ENCODE measurements at regions of chr6 and their contacts with region 1.

Region 1: GRCh38 chr6:87929843-87930288 is 117.8 kb upstream of the SPACA1 start:
- DNase-seq: peak; percentile 76
- H3K4me3 Mint-ChIP-seq: no peak overlapping the region
- H3K27ac Mint-ChIP-seq: no peak overlapping the region
- H3K4me1 Mint-ChIP-seq: no peaks in the 10 kb centered on the region
- H3K27me3 Mint-ChIP-seq: no peaks in the 10 kb centered on the region

Region 2: GRCh38 chr6:87139236-87139635 is 790.6 kb before region 1 on chr6:
- CTCF ChIA-PET with region 1: no interaction called
- intact Hi-C with region 1: loop called (anchors 5 kb)
- DNase-seq: peak; percentile 60
- H3K4me3 Mint-ChIP-seq: no peak overlapping the region
- H3K27ac Mint-ChIP-seq: no peak overlapping the region
- H3K4me1 Mint-ChIP-seq: peaks cover 2% of the 10 kb centered on the region
- H3K27me3 Mint-ChIP-seq: peaks cover 7% of the 10 kb centered on the region

Region 3: GRCh38 chr6:87832025-87832825 is 97.6 kb before region 1 on chr6:
- CTCF ChIA-PET with region 1: no interaction called
- intact Hi-C with region 1: loop called (anchors 5 kb)
- DNase-seq: no peak
- H3K4me3 Mint-ChIP-seq: peak overlapping the region; percentile 69
- H3K27ac Mint-ChIP-seq: peak overlapping the region; percentile 72
- H3K4me1 Mint-ChIP-seq: peaks cover 8% of the 10 kb centered on the region
- H3K27me3 Mint-ChIP-seq: no peaks in the 10 kb centered on the region

Region 4: GRCh38 chr6:87914637-87915395 is 15.1 kb before region 1 on chr6:
- CTCF ChIA-PET with region 1: no interaction called
- intact Hi-C with region 1: no loop called
- DNase-seq: no peak
- H3K4me3 Mint-ChIP-seq: no peak overlapping the region
- H3K27ac Mint-ChIP-seq: no peak overlapping the region
- H3K4me1 Mint-ChIP-seq: no peaks in the 10 kb centered on the region
- H3K27me3 Mint-ChIP-seq: no peaks in the 10 kb centered on the region

Region 5: DNA sequence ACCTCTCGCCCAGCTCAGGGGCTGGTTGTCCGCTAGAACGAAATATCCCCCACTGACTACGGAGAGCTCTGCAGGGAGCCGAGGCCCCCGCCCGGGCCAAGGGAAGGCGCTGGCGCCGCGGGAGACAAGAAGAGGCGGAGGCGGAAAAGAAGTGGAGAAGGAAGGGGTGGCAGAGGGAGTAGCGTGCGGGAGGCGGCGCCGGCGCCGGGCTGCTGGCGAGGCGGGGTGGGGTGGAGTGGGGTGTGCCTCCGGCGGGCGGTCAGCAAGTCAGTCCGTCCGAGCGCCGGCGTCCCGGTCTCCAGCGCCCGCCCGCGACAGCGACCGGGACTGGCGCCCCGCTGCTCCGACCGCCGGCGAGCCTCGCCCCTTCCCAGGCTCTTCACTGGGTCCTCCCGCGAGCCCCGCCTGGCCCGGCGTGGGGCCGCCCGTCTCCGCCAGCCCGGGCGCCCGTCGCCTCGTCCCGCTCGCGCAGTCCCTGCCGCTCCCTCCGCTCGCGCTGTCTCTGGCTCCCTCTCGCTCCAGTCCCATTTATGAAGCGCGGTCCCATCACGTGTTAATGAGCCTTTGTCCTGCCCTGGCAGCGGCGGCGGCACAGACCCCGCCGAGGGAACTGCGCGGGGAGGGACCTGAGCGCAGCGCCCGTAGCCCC is 236.1 kb after region 1 on chr6 and contains the start of gene CNR1:
- CTCF ChIA-PET with region 1: interaction called, 3 read pairs
- intact Hi-C with region 1: loop called (anchors 5 kb)
- DNase-seq: no peak
- H3K4me3 Mint-ChIP-seq: peak within 1 kb of the TSS; percentile 74
- H3K27ac Mint-ChIP-seq: no peak within 1 kb of the TSS
- H3K4me1 Mint-ChIP-seq: peaks cover 12% of the 10 kb centered on the region
- H3K27me3 Mint-ChIP-seq: peaks cover 55% of the 10 kb centered on the region
- total RNA-seq, gene CNR1: not detected

Region 6: GRCh38 chr6:88238065-88238464 is 308.2 kb after region 1 on chr6:
- CTCF ChIA-PET with region 1: interaction called, 3 read pairs
- intact Hi-C with region 1: loop called (anchors 1 kb)
- DNase-seq: peak; percentile 4
- H3K4me3 Mint-ChIP-seq: no peak overlapping the region
- H3K27ac Mint-ChIP-seq: no peak overlapping the region
- H3K4me1 Mint-ChIP-seq: no peaks in the 10 kb centered on the region
- H3K27me3 Mint-ChIP-seq: peaks cover 2% of the 10 kb centered on the region

Region 7: GRCh38 chr6:88780714-88781389 is 851.0 kb after region 1 on chr6:
- CTCF ChIA-PET with region 1: interaction called, 3 read pairs
- intact Hi-C with region 1: loop called (anchors 1 kb)
- DNase-seq: peak; percentile 66
- H3K4me3 Mint-ChIP-seq: no peak overlapping the region
- H3K27ac Mint-ChIP-seq: no peak overlapping the region
- H3K4me1 Mint-ChIP-seq: peaks cover 5% of the 10 kb centered on the region
- H3K27me3 Mint-ChIP-seq: no peaks in the 10 kb centered on the region

Region 8: GRCh38 chr6:88870717-88871330 is 941.0 kb after region 1 on chr6:
- CTCF ChIA-PET with region 1: interaction called, 7 read pairs
- intact Hi-C with region 1: loop called (anchors 1 kb)
- DNase-seq: peak; percentile 63
- H3K4me3 Mint-ChIP-seq: no peak overlapping the region
- H3K27ac Mint-ChIP-seq: no peak overlapping the region
- H3K4me1 Mint-ChIP-seq: peaks cover 33% of the 10 kb centered on the region
- H3K27me3 Mint-ChIP-seq: no peaks in the 10 kb centered on the region

Measured in activated naive CD4-positive, alpha-beta T cell treated with anti-CD3 and anti-CD28 coated beads for 36 hours (primary cell).